Activated B cell treated with CpG ODN at 0.5 μM for 24 hours (primary cell): ENCODE measurements at regions of chr7 and their contacts with region 1.

Region 1: GRCh38 chr7:76509931-76510877 is at the start of gene UPK3B:
- DNase-seq: no peak
- ATAC-seq: peak; percentile 18
- H3K4me3 Mint-ChIP-seq: no peak within 1 kb of the TSS
- H3K27ac Mint-ChIP-seq: no peak within 1 kb of the TSS
- H3K4me1 Mint-ChIP-seq: no peaks in the 10 kb centered on the region
- H3K27me3 Mint-ChIP-seq: no peaks in the 10 kb centered on the region
- CTCF ChIP-seq: no peak
- total RNA-seq, gene UPK3B: 3.2 and 3.4 TPM in 2 replicates

Region 2: DNA sequence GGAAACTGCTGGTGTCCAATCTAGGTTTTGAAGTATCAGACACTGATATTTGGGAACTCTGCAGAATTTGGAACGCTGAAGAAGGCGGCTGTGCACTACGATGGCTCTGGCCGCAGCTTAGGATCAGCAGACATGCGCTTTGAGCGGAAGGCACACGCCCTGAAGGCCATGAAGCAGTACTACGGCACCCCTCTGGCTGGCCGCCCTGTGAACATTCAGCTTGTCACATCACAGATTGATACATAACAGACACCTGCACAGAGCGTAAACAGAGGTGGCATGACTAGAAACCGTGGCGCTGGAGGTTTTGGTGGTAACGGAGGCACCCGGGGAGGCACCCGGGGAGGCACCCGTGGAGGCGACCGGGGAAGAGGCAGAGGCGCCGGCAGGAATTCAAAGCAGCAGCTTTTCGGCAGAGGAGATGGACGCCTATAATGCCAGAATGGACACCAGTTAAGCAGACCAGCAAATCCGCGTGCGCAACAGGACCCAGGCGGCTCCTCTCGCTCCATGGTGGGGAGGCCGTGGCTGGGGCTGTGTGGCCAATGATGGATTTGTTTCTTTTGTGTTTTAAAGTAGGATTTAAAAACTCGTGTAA is 674.4 kb before region 1 on chr7:
- CTCF ChIA-PET with region 1: no interaction called
- POLR2A ChIA-PET with region 1: no interaction called
- intact Hi-C with region 1: no loop called
- DNase-seq: no peak
- ATAC-seq: no peak
- H3K4me3 Mint-ChIP-seq: no peak overlapping the region
- H3K27ac Mint-ChIP-seq: no peak overlapping the region
- H3K4me1 Mint-ChIP-seq: no peaks in the 10 kb centered on the region
- H3K27me3 Mint-ChIP-seq: no peaks in the 10 kb centered on the region
- CTCF ChIP-seq: no peak

Region 3: GRCh38 chr7:76206633-76207032 is 303.6 kb before region 1 on chr7:
- CTCF ChIA-PET with region 1: no interaction called
- POLR2A ChIA-PET with region 1: no interaction called
- intact Hi-C with region 1: no loop called
- DNase-seq: no peak
- ATAC-seq: no peak
- H3K4me3 Mint-ChIP-seq: no peak overlapping the region
- H3K27ac Mint-ChIP-seq: no peak overlapping the region
- H3K4me1 Mint-ChIP-seq: no peaks in the 10 kb centered on the region
- H3K27me3 Mint-ChIP-seq: peaks cover 33% of the 10 kb centered on the region
- CTCF ChIP-seq: no peak

Region 4: GRCh38 chr7:76997381-76997780 is 487.2 kb after region 1 on chr7:
- CTCF ChIA-PET with region 1: no interaction called
- POLR2A ChIA-PET with region 1: no interaction called
- intact Hi-C with region 1: loop called (anchors 10 kb)
- DNase-seq: no peak
- ATAC-seq: no peak
- H3K4me3 Mint-ChIP-seq: no peak overlapping the region
- H3K27ac Mint-ChIP-seq: no peak overlapping the region
- H3K4me1 Mint-ChIP-seq: no peaks in the 10 kb centered on the region
- H3K27me3 Mint-ChIP-seq: no peaks in the 10 kb centered on the region
- CTCF ChIP-seq: no peak